Ascending aorta (tissue), 2 donors: ENCODE measurements at regions of chr1 and their contacts with region 1.

Region 1: DNA sequence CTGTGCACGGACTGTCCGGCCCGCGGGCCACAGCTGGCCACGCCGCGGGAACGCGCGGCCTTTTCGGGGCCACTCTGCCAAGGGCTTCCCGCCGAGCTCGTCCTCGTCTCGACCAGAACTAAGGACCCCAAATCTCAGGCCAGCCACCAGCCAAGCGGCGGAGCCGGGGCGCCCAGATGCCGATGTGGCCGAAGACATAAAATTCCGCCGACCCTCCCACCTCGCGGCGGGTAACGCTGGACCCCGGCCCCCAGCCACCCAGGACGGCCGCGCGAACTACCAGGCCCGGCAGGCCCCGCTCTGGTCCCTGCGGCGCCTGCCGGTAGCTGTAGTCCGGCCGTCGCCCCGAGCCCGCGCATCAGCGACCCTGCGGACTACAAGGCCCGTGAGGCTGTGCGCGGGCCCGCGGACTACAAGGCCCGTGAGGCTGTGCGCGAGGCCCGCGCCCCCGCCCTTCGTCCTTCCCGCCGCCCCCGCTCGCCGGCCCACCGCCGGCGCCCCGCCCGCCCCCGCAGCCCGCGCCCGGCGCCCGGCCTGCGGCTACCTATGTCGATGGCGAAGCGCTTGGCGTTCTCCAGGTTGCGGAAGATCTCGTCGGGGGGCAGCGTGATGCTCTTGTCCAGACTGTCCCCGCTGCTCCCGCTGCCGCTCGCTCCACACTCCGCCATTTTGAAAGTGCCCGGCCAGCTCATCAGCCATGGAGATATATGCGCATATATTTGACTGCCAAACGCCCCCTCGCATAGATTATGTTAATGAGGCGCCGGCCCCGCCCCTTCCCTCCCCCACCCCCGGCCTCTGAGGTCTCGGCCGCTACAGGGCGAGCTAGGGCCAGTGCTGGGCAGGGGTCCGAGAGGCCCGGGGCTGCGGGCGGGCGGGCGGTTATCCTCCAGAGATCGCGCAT is at the start of gene PANK4:
- DNase-seq: peak; percentile 68 to 96
- H3K4me3 ChIP-seq: peak within 1 kb of the TSS; percentile 75 to 80
- H3K27ac ChIP-seq: peak within 1 kb of the TSS; percentile 66 to 68
- H3K4me1 ChIP-seq: peaks cover 36 to 54% of the 10 kb centered on the region in 2 donors
- H3K27me3 ChIP-seq: no peaks in the 10 kb centered on the region
- CTCF ChIP-seq: no peak
- total RNA-seq, gene PANK4: 80.5 TPM

Region 2: DNA sequence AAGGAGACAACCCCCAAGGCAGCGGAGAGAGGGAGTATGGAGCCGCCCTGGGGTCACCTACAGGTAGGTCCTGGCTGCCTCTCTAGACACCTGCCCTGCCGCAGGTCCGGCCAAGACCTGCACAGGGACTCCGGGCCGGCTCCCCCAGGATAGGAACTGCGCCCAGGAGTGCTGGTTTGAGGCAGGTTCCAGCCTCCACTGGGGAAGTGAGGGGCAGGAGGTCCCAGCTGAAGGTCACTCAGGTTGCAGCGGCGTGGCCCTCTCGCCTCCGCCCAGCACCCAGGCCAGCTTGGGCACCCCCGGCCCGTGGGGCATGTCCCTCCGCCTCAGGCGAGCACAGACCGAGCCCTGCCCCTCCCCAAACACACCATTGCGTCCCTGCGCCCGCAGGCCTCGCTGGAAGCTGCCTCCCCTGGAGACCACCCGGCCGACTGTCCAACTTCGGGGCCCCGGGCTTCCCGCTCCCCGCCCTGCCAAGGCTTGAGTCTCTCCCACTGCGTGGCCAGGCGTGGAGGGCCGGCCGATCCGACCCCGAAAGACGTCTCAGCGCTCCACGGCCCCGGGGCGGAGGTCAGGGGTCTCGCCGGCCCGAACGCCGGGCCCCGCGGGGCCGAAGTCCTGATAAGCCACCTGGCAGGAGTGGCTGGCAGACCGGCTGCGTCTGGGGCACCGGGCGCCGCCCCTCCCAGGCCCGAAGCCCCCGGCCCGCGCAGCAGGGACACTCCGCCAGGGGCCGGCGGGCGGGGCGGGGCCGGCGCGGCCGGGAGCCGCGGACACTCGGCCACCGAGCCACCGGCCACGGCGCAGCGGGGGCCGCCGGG is 299.4 kb before region 1 on chr1:
- intact Hi-C with region 1: no loop called
- DNase-seq: peak in 1 of 2 donors; percentile 72
- H3K4me3 ChIP-seq: peak overlapping the region; percentile 81 to 90
- H3K27ac ChIP-seq: peak overlapping the region; percentile 99
- H3K4me1 ChIP-seq: peaks cover 5 to 6% of the 10 kb centered on the region in 2 donors
- H3K27me3 ChIP-seq: no peaks in the 10 kb centered on the region
- CTCF ChIP-seq: no peak

Region 3: DNA sequence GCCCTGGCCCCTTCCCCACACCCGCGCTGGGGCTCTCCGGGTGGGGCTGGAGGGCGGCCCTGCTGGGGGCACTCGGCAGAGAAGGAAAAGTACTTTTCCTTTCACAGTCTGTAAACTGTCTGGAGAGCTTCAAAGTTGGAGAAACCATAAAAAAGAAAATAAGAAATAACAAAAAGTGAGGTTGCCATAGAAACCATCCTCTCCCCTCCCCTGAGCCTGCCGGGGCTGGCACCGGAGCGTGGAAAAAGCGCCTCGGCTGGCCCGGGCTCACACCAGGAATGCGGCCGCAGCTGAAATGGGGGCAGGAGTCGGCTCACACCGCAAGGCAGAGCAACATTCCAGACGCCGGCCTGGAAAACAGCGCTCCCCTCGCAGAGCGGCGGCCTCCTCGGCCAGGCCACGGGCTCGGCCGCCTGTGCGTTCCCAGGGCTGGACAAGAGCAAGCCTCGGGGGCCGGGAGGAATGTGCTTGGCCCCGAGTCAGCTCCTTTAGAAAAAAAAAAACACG is 204.1 kb before region 1 on chr1:
- intact Hi-C with region 1: loop called (anchors 1 kb)
- DNase-seq: peak; percentile 52 to 94
- H3K4me3 ChIP-seq: peak overlapping the region; percentile 28 to 54
- H3K27ac ChIP-seq: peak overlapping the region; percentile 92 to 96
- H3K4me1 ChIP-seq: peaks cover 24 to 40% of the 10 kb centered on the region in 2 donors
- H3K27me3 ChIP-seq: no peaks in the 10 kb centered on the region
- CTCF ChIP-seq: peak in 2 of 3 experiments; percentile 20 to 26

Region 4: GRCh38 chr1:2391041-2391930 is 134.9 kb before region 1 on chr1 and contains the starts of genes MORN1 and RER1:
- intact Hi-C with region 1: loop called (anchors 1 kb)
- DNase-seq: peak; percentile 94 to 99
- H3K4me3 ChIP-seq: peak within 1 kb of the TSS; percentile 81 to 86
- H3K27ac ChIP-seq: peak within 1 kb of the TSS; percentile 84 to 86
- H3K4me1 ChIP-seq: peaks cover 4 to 18% of the 10 kb centered on the region in 2 donors
- H3K27me3 ChIP-seq: no peaks in the 10 kb centered on the region
- CTCF ChIP-seq: no peak
- total RNA-seq, gene MORN1: 18.4 TPM
- total RNA-seq, gene RER1: 61.3 TPM

Region 5: GRCh38 chr1:2545759-2546514 is 19.8 kb after region 1 on chr1:
- intact Hi-C with region 1: loop called (anchors 1 kb)
- DNase-seq: peak; percentile 71 to 91
- H3K4me3 ChIP-seq: peak overlapping the region; percentile 53 to 67
- H3K27ac ChIP-seq: peak overlapping the region; percentile 92 to 95
- H3K4me1 ChIP-seq: peaks cover 13 to 36% of the 10 kb centered on the region in 2 donors
- H3K27me3 ChIP-seq: no peaks in the 10 kb centered on the region
- CTCF ChIP-seq: no peak

Region 6: DNA sequence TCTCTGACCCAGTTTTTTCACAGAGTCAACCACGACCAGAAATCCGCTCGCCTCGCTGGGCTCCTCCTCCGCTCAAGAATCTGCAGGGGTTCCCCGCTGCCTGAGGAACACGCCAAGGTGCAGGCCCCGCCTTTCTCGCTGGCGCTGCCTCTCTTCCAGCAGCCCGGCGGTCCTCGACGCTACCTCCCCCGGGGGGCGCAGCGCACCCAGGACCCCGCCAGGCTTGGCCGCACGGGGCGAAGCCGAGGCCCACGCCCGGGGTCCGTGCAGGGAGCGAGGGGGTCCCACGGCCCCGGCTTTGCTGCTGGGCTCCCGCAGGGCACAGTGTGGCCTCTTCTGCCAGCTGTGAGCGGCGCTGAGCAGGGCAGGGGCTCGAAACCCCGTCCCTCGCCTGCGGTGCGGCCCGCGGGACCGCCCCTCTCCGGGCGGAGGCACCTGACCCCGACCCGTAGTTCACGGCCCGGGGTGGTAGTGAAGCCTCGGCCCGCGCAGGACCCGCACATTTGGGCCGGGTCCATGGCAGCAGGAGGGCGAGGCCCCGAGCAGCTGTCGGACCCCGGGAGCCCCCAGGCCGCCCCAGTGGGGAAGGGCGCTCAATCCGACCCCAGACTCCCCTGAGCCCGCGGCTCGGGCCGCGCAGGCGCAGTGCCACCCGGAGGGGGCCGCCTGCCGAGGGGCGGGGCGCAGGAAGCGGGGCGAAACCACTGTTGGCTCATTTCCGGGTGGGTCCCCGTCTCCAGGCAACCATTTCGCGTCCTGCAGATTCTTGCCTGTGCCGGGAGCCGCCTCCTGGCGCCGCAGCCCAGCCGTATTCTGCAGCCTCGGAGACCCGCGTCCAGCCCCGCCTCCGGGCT is 116.6 kb after region 1 on chr1:
- intact Hi-C with region 1: loop called (anchors 2 kb)
- DNase-seq: peak; percentile 64 to 92
- H3K4me3 ChIP-seq: peak overlapping the region; percentile 74 to 86
- H3K27ac ChIP-seq: peak overlapping the region; percentile 45 to 48
- H3K4me1 ChIP-seq: peaks cover 8 to 18% of the 10 kb centered on the region in 2 donors
- H3K27me3 ChIP-seq: no peaks in the 10 kb centered on the region
- CTCF ChIP-seq: peak in 1 of 3 experiments; percentile 5